ENCODE measurements at regions of chr17 and their contacts with region 1.

Region 1: DNA sequence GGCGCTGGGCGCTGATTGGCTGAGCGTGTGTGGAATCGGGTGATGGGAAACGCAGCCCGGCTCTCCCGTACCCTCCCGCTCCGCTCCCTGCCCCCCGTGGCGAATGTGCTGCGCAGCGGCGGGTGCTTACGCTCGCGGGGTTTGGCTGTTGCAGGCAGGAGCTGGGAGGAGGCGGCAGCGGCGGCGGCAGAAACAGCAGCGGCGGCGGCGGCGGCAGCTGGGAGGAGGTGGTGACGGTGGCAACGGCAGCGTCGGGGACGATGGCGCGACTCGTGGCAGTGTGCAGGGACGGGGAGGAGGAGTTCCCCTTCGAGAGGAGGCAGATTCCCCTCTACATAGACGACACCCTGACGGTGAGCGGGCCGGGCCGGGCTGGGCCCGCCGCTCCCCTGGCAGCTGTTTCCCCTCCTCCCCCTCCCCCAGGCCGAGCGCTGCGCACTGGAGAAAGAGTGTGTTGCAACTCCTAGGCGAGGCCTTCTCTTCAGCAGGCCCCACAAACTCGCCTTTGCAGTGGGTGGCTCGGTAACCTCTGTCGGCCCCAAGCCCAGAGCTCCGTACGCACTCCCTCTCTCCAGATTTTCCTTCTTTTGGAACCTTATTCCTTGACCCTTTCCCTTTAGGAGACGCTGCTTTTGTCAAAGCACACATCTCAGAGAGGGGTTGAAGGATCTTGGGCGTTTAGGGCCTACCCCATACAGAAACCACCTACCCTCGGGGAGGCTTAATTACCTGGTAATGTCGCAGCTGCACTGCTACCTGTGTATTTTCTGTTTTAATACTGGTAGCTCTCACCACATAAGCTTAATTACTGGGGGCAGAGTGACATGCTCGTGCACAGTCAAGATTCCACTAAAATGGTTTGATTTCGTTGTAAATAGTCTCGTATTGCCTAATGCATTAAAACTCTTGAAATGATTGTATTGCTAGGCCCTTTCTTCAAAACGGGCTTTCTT is 1.0 kb downstream of the GGNBP2 start:
- DNase-seq: peak; percentile 90 to 99 (median 97)
- ATAC-seq: peak; percentile 77 to 85 (median 82)
- H3K4me3 ChIP-seq: peak overlapping the region; percentile 82 to 89
- H3K4me3 Mint-ChIP-seq: peak overlapping the region; percentile 87 to 96 (median 87)
- H3K27ac ChIP-seq: peak overlapping the region; percentile 88
- H3K27ac Mint-ChIP-seq: peak overlapping the region; percentile 87 to 90
- H3K4me1 ChIP-seq: peaks cover 29 to 34% of the 10 kb centered on the region in 2 experiments
- H3K4me1 Mint-ChIP-seq: peaks cover 44 to 50% (median 48%) of the 10 kb centered on the region in 3 donors
- H3K27me3 ChIP-seq: no peaks in the 10 kb centered on the region
- H3K27me3 Mint-ChIP-seq: no peaks in the 10 kb centered on the region

Region 2: DNA sequence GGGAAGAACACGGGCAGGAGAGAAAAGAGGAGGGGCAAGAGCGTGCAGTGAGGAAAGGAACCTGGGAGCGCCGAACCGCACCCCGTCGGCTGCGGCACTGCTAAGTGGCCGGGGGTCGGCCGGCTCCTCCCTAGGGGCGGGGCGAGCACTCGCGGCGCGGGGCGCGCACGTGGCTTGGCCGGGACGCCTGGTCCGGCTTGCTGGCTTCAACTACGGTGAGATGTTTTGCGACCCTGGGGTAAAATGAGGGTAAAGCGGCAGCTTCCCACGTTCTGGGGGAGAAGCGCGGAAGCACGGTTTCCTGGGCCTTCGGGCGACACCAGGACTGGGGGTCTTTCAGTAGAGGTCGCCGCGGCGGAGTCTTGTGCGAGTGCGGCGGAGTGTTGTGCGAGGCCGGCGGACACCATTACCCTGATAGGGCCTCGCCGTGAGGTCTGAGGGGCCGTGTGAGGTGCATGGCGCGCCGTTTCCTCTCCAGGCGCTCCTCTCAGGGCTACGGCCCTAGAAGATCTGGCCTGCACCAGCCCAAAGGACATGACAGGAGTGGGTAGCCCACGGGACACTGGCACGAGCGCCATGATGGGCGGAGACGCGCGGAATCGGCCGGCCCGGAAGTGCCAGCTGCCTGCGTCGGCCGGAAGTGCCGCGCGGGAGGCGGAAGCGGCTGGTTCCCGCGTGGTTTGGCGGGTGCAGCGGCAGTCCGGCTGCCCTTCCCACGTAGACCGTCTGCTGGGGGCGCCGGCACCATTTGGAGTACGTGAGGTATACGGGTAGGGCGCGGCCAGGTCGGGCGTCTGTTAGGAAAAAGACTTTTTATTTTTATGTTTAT is 10.7 kb before region 1 on chr17 and contains the starts of genes MYO19 and PIGW:
- CTCF ChIA-PET with region 1: interaction called in 1 of 2 experiments, 5 read pairs
- POLR2A ChIA-PET with region 1: interaction called in 1 of 2 experiments, 11 read pairs
- DNase-seq: peak; percentile 65 to 91 (median 77)
- ATAC-seq: peak; percentile 83 to 86 (median 85)
- H3K4me3 ChIP-seq: peak within 1 kb of the TSS; percentile 91 to 99
- H3K4me3 Mint-ChIP-seq: peak within 1 kb of the TSS; percentile 94 to 99 (median 97)
- H3K27ac ChIP-seq: peak within 1 kb of the TSS; percentile 95
- H3K27ac Mint-ChIP-seq: peak within 1 kb of the TSS; percentile 94 to 97
- H3K4me1 ChIP-seq: peaks cover 2 to 19% of the 10 kb centered on the region in 2 experiments
- H3K4me1 Mint-ChIP-seq: peaks cover 16 to 30% (median 19%) of the 10 kb centered on the region in 3 donors
- H3K27me3 ChIP-seq: no peaks in the 10 kb centered on the region
- H3K27me3 Mint-ChIP-seq: no peaks in the 10 kb centered on the region
- total RNA-seq, gene MYO19: 73.1 to 80.8 (median 79.4) TPM
- total RNA-seq, gene PIGW: 6.0 to 8.7 (median 6.5) TPM

Region 3: GRCh38 chr17:36594626-36595401 is 49.1 kb after region 1 on chr17:
- CTCF ChIA-PET with region 1: no interaction called
- POLR2A ChIA-PET with region 1: no interaction called
- DNase-seq: no peak
- ATAC-seq: no peak
- H3K4me3 ChIP-seq: no peak overlapping the region
- H3K4me3 Mint-ChIP-seq: no peak overlapping the region
- H3K27ac ChIP-seq: no peak overlapping the region
- H3K27ac Mint-ChIP-seq: no peak overlapping the region
- H3K4me1 ChIP-seq: peaks cover 2 to 21% of the 10 kb centered on the region in 2 experiments
- H3K4me1 Mint-ChIP-seq: peaks cover 21 to 31% (median 23%) of the 10 kb centered on the region in 3 donors
- H3K27me3 ChIP-seq: peaks cover 0 to 14% of the 10 kb centered on the region in 2 experiments
- H3K27me3 Mint-ChIP-seq: no peaks in the 10 kb centered on the region

Region 4: GRCh38 chr17:37413875-37414519 is 868.3 kb after region 1 on chr17:
- CTCF ChIA-PET with region 1: no interaction called
- POLR2A ChIA-PET with region 1: no interaction called
- DNase-seq: no peak
- ATAC-seq: no peak
- H3K4me3 ChIP-seq: no peak overlapping the region
- H3K4me3 Mint-ChIP-seq: no peak overlapping the region
- H3K27ac ChIP-seq: no peak overlapping the region
- H3K27ac Mint-ChIP-seq: peak overlapping the region in 1 of 2 donors; percentile 65
- H3K4me1 ChIP-seq: no peaks in the 10 kb centered on the region
- H3K4me1 Mint-ChIP-seq: peaks cover 10 to 25% (median 14%) of the 10 kb centered on the region in 3 donors
- H3K27me3 ChIP-seq: no peaks in the 10 kb centered on the region
- H3K27me3 Mint-ChIP-seq: no peaks in the 10 kb centered on the region